ENCODE measurements at regions of chr10 and their contacts with region 1.

Region 1: GRCh38 chr10:28179006-28179742 is 123.7 kb downstream of the MPP7 start:
- DNase-seq: peak; percentile 23
- H3K4me3 ChIP-seq: no peak overlapping the region
- H3K27ac ChIP-seq: no peak overlapping the region
- H3K4me1 ChIP-seq: no peaks in the 10 kb centered on the region
- H3K27me3 ChIP-seq: peaks cover 7% of the 10 kb centered on the region; the same call in 1 of the 2 replicates
- CTCF ChIP-seq: peak; percentile 88
- EP300 ChIP-seq: no peak
- RAD21 ChIP-seq: peak; percentile 74

Region 2: DNA sequence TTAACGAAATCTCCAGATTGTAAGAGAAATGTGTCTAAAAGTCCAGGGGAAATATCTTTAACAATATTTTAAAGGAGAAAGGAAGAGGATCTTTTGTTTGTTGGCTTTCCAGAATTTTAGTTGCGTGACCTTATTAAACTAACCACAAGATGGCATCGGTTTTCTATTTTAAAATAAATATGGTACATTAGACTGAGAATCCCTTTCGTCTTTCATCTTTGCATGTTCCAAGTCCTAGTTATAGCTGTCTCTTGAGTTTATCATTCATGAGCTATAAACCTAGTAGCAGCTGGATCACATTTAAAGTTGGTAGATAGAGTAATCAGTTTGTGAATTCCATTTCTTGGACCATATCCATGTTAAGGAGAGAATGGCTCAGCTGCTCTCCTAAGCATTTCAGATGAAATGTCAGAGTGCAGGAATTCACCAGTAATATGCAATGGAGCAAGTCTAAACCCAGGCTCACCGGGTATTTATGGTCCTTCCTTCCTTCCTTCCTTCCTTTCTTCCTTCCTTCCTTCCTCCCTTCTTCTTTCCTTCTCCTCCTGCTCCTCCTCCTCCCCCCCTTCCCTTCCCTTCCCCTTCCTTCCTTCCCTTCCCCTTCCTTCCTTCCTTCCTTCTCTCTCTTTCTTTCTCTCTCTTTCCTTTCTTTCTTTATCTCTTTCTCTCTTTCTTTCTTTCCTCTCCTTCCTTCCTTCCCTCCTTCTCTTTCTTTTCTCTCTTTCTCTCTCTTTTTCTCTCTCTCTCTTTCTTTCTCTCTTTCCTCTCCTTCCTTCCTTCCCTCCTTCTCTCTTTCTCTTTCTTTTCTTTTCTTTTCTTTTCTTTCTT is 732.9 kb before region 1 on chr10:
- CTCF ChIA-PET with region 1: interaction called, 10 read pairs
- POLR2A ChIA-PET with region 1: no interaction called
- DNase-seq: peak; percentile 9
- H3K4me3 ChIP-seq: no peak overlapping the region
- H3K27ac ChIP-seq: no peak overlapping the region
- H3K4me1 ChIP-seq: no peaks in the 10 kb centered on the region
- H3K27me3 ChIP-seq: peaks cover 5% of the 10 kb centered on the region; the same call in 1 of the 2 replicates
- CTCF ChIP-seq: peak; percentile 66
- EP300 ChIP-seq: no peak
- RAD21 ChIP-seq: peak; percentile 66

Region 3: DNA sequence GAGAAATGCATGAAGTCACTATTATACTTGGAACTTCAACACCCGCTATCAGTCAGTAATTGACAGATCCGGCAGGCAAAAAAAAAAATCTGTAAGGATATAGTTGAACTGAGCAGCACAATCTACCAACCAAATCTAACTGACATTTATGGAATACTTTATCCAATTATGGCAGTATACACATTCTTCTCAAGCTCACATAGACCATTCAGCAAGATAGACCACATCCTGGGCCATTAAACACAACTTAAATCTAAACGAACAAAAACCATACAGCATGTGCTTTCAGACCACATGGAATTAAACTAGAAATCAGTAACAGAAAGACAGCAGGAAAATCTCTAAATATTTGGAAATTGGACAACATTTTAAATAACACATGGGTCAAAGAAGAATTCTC is 11.0 kb after region 1 on chr10:
- CTCF ChIA-PET with region 1: interaction called, 12 read pairs
- POLR2A ChIA-PET with region 1: no interaction called
- DNase-seq: no peak
- H3K4me3 ChIP-seq: no peak overlapping the region
- H3K27ac ChIP-seq: no peak overlapping the region
- H3K4me1 ChIP-seq: no peaks in the 10 kb centered on the region
- H3K27me3 ChIP-seq: no peaks in the 10 kb centered on the region; the same call in 1 of the 2 replicates
- CTCF ChIP-seq: no peak
- EP300 ChIP-seq: no peak
- RAD21 ChIP-seq: no peak

Region 4: DNA sequence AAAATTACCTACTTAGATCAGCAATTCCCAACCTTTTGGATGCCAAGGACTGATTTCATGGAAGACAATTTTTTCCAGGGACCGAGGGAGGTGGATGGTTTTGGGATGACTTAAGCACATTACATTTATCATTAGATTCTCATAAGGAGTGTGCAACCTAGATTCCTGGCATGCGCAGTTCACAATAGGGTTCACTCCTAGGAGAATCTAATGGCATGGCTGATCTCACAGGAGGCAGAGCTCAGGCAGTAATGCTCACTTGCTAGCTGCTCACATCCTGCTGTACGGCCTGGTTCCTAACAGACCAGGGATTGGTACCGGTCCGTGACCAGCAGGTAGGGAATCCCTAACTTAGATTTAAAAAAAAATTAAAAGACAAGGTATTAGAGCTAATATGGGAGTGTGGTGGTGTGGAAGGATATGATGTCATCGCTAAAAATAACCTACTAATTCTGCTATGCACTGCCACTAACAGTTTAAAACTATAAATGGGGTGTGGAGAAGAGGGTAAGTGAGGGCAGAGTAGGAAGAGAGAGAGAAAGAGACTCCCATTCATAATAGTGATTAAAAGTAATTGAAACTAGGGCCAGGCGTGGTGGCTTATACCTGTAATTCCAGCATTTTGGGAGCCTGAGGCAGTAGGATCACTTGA is 780.8 kb after region 1 on chr10:
- CTCF ChIA-PET with region 1: no interaction called
- POLR2A ChIA-PET with region 1: no interaction called
- DNase-seq: no peak
- H3K4me3 ChIP-seq: no peak overlapping the region
- H3K27ac ChIP-seq: no peak overlapping the region
- H3K4me1 ChIP-seq: no peaks in the 10 kb centered on the region
- H3K27me3 ChIP-seq: no peaks in the 10 kb centered on the region
- CTCF ChIP-seq: no peak
- EP300 ChIP-seq: no peak
- RAD21 ChIP-seq: no peak